Activated naive CD8-positive, alpha-beta T cell treated with anti-CD3 and anti-CD28 coated beads, Interleukin-2, amount 10 ng/mL, durations not matched to agents 7 days and 5 days (primary cell): ENCODE measurements at regions of chr3 and their contacts with region 1.

Region 1: DNA sequence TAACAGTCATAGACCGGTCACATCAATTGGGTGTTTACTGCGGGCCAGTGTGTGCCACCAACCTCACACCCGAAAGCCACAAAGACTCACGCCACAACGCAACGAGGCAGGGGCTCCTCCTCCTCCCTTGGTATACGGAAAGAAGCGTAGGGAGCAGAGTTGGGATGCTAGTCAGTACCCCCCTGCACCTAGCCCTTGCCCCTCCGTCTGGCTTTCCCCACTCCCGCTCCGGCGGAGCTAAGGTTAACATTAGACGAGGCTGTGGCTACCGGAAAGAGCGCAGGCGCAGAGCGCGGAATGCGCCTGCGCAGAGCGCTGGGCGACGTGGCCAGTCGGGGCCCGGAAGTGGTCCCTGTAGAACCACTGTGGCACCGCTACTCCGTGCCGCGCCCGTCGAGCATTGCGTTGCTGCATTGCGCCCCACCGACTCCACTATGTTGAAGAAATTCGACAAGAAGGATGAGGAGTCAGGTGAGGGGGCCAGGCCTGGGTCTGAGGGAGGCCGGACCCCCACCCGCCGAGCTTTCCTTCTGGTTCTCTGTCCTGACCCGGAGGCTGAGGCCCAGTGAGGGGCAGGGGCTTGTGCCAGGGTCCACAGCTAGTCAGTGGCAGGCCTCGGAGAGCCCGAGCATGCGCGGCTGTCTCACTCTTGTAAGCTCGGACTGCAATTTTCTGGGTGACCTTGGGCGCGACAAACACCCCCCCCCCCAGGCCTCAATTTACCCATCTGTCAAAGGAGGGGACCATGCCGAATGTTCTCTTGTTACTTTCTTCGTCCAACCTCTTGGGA is at the start of gene COPG1:
- DNase-seq: peak; percentile 94
- ATAC-seq: peak; percentile 92
- H3K4me3 Mint-ChIP-seq: peak within 1 kb of the TSS; percentile 99
- H3K27ac Mint-ChIP-seq: peak within 1 kb of the TSS; percentile 98
- H3K4me1 Mint-ChIP-seq: peaks cover 42% of the 10 kb centered on the region
- H3K27me3 Mint-ChIP-seq: no peaks in the 10 kb centered on the region
- total RNA-seq, gene COPG1: 131 to 138 TPM

Region 2: DNA sequence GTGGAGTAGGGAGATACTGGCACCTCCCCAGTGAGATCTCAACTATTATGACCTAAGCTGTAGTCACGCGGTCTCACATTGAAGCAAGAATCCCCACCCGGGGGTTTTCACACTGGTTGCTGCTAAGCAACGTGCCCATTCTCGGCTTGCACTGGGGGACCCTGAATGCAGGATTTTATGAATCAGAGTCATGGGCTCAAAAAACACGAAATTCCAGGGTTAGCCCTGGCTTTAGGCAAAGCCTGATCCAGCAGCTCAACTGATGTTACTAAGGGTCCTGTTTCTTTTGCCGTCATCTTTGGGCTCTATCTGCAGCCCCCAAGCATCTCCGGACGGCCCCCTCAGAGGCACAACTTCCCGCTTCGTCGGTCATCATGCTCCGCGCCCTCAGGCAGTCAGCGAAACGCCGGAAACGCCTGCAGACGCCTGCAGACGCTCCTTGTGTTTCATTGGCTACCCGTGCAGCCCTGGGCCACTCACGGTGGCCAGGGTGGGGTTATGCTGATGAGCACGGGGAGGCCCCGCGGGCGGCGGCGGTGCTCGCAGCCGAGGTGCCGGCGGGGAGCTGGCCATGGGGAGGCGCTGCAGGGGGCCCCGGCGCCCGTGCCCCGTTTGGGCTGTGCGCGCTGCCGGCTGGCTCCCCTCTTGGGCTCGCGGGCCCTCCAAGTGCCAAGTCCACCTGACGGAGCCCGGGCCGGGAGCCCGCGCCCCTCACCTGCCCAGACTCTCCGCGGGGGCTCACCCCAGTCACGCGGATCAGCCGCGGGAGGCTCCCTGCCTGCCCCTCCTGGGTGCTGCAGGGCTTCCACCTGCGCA is 222.5 kb before region 1 on chr3:
- POLR2A ChIA-PET with region 1: interaction called, 13 read pairs
- DNase-seq: peak; percentile 95
- ATAC-seq: peak; percentile 100
- H3K4me3 Mint-ChIP-seq: peak overlapping the region; percentile 75
- H3K27ac Mint-ChIP-seq: peak overlapping the region; percentile 89
- H3K4me1 Mint-ChIP-seq: peaks cover 20% of the 10 kb centered on the region
- H3K27me3 Mint-ChIP-seq: no peaks in the 10 kb centered on the region

Region 3: DNA sequence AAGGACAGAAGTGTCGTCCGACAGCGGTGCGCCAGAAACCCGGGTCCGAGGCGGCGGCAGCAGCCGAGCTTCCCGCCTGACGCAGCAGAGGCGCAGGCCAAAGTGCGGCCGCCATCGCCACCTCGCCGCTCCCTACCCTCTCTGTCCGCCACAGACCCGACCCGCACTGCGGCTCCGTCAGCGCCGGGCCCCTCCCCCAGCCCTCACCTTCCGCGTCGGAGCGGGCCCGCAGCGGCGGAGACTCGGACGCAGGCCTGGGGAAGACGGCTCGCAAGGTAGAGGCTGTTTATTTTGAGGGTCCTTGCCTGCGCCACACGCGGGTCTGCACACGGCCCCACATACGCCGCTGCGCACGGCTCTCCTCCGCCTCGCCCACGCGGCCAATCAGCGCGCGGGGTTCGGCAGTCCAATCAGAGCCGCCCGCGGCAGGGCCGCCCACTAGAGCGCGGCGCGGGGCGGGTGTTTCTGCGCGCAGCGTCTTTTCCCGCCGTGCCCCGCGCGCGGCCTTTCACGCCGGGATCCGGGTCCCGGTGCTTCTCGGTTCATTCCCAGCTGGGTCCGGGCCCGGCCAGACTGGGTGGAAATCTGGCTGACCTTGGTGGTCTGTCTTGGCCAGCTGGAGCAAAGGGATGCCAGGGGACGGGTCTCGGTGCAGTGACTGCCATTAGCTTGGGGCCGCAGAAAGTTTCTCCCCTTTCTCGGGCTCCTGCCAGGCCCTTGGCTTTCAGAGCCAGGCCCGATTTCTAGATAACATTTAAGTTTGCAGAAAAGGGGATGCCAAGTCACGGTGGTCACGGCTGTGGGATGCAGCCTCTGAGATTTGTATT is 65.7 kb before region 1 on chr3 and contains the start of gene CNBP:
- POLR2A ChIA-PET with region 1: interaction called, 26 read pairs
- DNase-seq: peak; percentile 97
- ATAC-seq: peak; percentile 98
- H3K4me3 Mint-ChIP-seq: peak within 1 kb of the TSS; percentile 92
- H3K27ac Mint-ChIP-seq: peak within 1 kb of the TSS; percentile 98
- H3K4me1 Mint-ChIP-seq: peaks cover 38% of the 10 kb centered on the region
- H3K27me3 Mint-ChIP-seq: no peaks in the 10 kb centered on the region
- total RNA-seq, gene CNBP: 309 to 312 TPM

Region 4: DNA sequence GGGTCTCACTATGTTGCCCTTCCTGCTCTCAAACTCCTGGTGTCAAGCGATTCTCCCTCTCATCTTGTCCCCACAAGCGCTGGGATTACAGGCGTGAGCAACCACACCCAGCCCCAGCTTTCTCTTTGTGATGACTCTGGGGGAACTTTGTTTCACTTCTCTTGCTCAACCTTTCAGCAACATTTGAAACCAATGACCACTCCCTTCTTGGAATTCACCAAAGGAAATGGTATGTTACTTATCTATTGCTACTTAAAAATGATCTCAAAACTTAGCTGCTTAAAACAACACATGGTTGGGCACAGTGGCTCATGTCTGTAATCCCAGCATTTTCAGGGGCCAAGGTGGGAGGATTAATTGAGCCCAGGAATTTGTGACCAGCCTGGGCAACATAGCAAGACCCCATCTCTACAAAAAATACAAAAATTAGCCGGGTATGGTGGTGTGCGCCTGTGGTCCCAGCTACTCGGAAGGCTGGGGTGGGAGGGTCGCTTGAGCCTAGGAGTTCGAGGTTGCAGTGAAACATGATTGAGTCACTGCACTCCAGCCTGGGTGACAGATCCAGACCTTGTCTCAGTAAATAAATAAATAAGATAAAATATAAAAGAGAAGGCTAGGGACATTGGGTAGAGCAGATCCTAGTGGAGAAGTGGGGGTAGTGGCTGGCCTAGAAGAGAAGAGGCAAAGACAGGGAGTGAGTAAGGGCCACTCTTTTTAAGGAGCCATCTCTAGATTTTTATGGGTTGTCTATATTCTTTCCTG is 10.3 kb before region 1 on chr3:
- POLR2A ChIA-PET with region 1: interaction called, 19 read pairs
- DNase-seq: peak; percentile 56
- ATAC-seq: peak; percentile 80
- H3K4me3 Mint-ChIP-seq: peak overlapping the region; percentile 67
- H3K27ac Mint-ChIP-seq: peak overlapping the region; percentile 93
- H3K4me1 Mint-ChIP-seq: peaks cover 32% of the 10 kb centered on the region
- H3K27me3 Mint-ChIP-seq: no peaks in the 10 kb centered on the region